Caco-2 (cell line): ENCODE measurements at regions of chr7 and their contacts with region 1.

Region 1: GRCh38 chr7:121449329-121449728 is 53.2 kb upstream of the FAM3C start:
- DNase-seq: peak in 1 of 2 experiments; percentile 24
- H3K4me3 ChIP-seq: no peak overlapping the region
- H3K4me3 Mint-ChIP-seq: no peak overlapping the region
- H3K27ac Mint-ChIP-seq: no peak overlapping the region
- H3K4me1 ChIP-seq: no peaks in the 10 kb centered on the region
- H3K4me1 Mint-ChIP-seq: no peaks in the 10 kb centered on the region
- H3K27me3 ChIP-seq: no peaks in the 10 kb centered on the region
- H3K27me3 Mint-ChIP-seq: no peaks in the 10 kb centered on the region
- CTCF ChIP-seq: peak in 1 of 2 experiments; percentile 8

Region 2: GRCh38 chr7:121366852-121367431 is 82.4 kb before region 1 on chr7:
- CTCF ChIA-PET with region 1: no interaction called
- POLR2A ChIA-PET with region 1: no interaction called
- intact Hi-C with region 1: loop called (anchors 5 kb)
- DNase-seq: peak in 1 of 2 experiments; percentile 28
- H3K4me3 ChIP-seq: no peak overlapping the region
- H3K4me3 Mint-ChIP-seq: no peak overlapping the region
- H3K27ac Mint-ChIP-seq: no peak overlapping the region
- H3K4me1 ChIP-seq: no peaks in the 10 kb centered on the region
- H3K4me1 Mint-ChIP-seq: no peaks in the 10 kb centered on the region
- H3K27me3 ChIP-seq: no peaks in the 10 kb centered on the region
- H3K27me3 Mint-ChIP-seq: no peaks in the 10 kb centered on the region
- CTCF ChIP-seq: peak; percentile 55 to 67

Region 3: GRCh38 chr7:121420979-121421378 is 28.4 kb before region 1 on chr7:
- CTCF ChIA-PET with region 1: no interaction called
- POLR2A ChIA-PET with region 1: no interaction called
- intact Hi-C with region 1: loop called (anchors 1 kb)
- DNase-seq: peak; percentile 69 to 81
- H3K4me3 ChIP-seq: no peak overlapping the region
- H3K4me3 Mint-ChIP-seq: peak overlapping the region; percentile 37
- H3K27ac Mint-ChIP-seq: peak overlapping the region; percentile 48
- H3K4me1 ChIP-seq: peaks cover 27% of the 10 kb centered on the region
- H3K4me1 Mint-ChIP-seq: peaks cover 8% of the 10 kb centered on the region
- H3K27me3 ChIP-seq: no peaks in the 10 kb centered on the region
- H3K27me3 Mint-ChIP-seq: no peaks in the 10 kb centered on the region
- CTCF ChIP-seq: no peak

Region 4: DNA sequence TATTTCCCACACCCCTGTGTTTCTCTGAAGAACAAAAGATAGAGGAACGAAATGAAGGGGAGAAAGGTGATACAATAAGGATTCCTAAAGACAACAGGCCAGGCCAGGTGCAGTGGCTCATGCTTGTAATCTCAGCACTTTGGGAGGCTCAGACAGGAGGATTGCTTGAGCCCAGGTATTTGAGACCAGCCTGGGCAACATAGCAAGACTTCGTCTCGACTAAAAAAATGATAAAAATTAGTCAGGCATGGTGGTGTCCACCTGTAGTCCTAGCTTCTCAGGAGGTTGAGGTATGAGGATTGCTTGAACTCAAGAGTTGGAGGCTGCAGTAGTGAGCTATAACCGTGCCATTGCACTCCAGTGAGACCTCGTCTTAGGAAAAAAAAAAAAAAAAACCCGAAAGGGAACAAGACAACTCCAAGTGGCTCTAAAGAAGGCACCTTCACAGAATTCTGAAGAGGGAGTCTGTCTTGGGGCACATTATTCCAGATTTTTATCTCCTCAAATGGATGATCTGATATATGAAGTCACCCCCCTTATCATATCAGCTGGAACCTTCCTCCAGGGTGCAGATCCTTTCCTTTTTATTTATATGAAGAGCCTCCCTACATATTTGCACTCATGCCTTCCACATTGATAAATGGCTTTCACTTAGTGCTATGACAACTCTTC is 11.7 kb before region 1 on chr7:
- CTCF ChIA-PET with region 1: no interaction called
- POLR2A ChIA-PET with region 1: no interaction called
- intact Hi-C with region 1: loop called (anchors 1 kb)
- DNase-seq: no peak
- H3K4me3 ChIP-seq: no peak overlapping the region
- H3K4me3 Mint-ChIP-seq: peak overlapping the region; percentile 74
- H3K27ac Mint-ChIP-seq: peak overlapping the region; percentile 81
- H3K4me1 ChIP-seq: peaks cover 23% of the 10 kb centered on the region
- H3K4me1 Mint-ChIP-seq: peaks cover 13% of the 10 kb centered on the region
- H3K27me3 ChIP-seq: no peaks in the 10 kb centered on the region
- H3K27me3 Mint-ChIP-seq: no peaks in the 10 kb centered on the region
- CTCF ChIP-seq: no peak

Region 5: GRCh38 chr7:121480058-121480457 is 30.7 kb after region 1 on chr7:
- CTCF ChIA-PET with region 1: no interaction called
- POLR2A ChIA-PET with region 1: no interaction called
- intact Hi-C with region 1: no loop called
- DNase-seq: peak in 1 of 2 experiments; percentile 8
- H3K4me3 ChIP-seq: no peak overlapping the region
- H3K4me3 Mint-ChIP-seq: no peak overlapping the region
- H3K27ac Mint-ChIP-seq: no peak overlapping the region
- H3K4me1 ChIP-seq: no peaks in the 10 kb centered on the region
- H3K4me1 Mint-ChIP-seq: no peaks in the 10 kb centered on the region
- H3K27me3 ChIP-seq: no peaks in the 10 kb centered on the region
- H3K27me3 Mint-ChIP-seq: no peaks in the 10 kb centered on the region
- CTCF ChIP-seq: no peak

Region 6: DNA sequence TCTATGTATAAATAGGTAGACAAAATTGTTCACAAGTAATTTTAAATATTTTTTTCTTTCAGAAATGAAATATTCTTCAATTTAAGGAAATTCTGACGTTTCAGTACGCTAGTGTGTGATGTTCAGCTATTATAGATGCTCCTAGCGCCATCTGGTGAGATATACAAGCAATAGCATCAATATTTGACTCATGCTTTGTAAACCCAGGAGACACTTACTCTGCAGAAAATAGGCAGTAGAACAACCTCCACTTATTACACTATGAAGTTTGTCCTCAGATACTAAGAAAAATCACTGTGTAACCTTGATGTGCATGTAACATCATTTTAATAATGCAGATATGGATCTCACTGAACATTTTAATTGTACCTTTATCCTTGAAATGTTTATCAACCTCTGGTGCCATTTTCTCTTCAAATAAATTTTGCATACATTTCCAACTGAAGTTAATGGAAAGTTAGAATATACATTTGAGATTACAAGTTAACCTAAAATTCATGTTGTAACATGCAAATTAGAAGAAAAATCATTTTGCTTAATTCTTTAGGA is 98.3 kb after region 1 on chr7:
- CTCF ChIA-PET with region 1: no interaction called
- POLR2A ChIA-PET with region 1: no interaction called
- intact Hi-C with region 1: loop called (anchors 1 kb)
- DNase-seq: peak in 1 of 2 experiments; percentile 20
- H3K4me3 ChIP-seq: no peak overlapping the region
- H3K4me3 Mint-ChIP-seq: no peak overlapping the region
- H3K27ac Mint-ChIP-seq: no peak overlapping the region
- H3K4me1 ChIP-seq: peaks cover 11% of the 10 kb centered on the region; the same call in 1 of the 2 replicates
- H3K4me1 Mint-ChIP-seq: no peaks in the 10 kb centered on the region
- H3K27me3 ChIP-seq: no peaks in the 10 kb centered on the region
- H3K27me3 Mint-ChIP-seq: peaks cover 3% of the 10 kb centered on the region
- CTCF ChIP-seq: peak; percentile 67 to 74

Region 7: DNA sequence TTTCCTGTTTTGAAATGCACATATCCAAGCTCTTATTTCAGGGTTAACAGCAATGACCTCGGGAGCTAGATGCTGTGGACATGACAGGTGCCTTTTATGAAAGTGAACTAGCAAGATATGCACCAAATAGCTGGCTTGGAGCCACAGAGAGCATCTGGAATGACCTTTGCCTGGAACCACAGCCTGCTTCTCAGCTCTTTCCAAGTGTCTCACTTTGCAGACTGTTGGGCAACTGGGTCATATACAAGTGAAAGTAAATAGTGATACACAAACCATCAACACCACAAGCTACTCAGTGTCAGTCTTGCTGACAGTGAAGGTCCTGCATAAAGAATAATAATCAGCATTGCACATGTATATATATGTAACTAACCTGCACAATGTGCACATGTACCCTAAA is 1066.1 kb after region 1 on chr7:
- CTCF ChIA-PET with region 1: no interaction called
- POLR2A ChIA-PET with region 1: no interaction called
- intact Hi-C with region 1: no loop called
- DNase-seq: no peak
- H3K4me3 ChIP-seq: no peak overlapping the region
- H3K4me3 Mint-ChIP-seq: no peak overlapping the region
- H3K27ac Mint-ChIP-seq: no peak overlapping the region
- H3K4me1 ChIP-seq: no peaks in the 10 kb centered on the region
- H3K4me1 Mint-ChIP-seq: no peaks in the 10 kb centered on the region
- H3K27me3 ChIP-seq: no peaks in the 10 kb centered on the region
- H3K27me3 Mint-ChIP-seq: peaks cover 3% of the 10 kb centered on the region
- CTCF ChIP-seq: no peak